OCI-LY7 (cell line): ENCODE measurements at regions of chr13 and their contacts with region 1.

Region 1: DNA sequence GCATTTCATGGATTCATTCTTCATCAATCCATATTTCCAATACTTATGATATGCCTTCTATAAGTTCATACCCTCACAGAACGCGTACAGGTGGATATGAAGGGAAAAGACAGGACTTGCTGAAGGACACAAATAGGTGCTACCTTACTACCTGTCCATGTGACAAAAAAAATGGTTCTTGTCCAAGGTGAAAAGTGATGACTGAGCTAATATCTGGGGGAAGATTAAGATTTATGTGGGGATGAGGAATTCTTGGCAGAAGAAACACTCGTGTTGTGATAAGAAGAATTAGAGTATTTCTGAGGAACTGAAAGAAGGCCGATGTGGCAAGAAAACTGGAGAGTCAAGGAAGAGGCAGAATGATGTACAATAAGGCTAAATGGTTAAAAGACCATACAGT is 356.4 kb upstream of the ATXN8OS start:
- DNase-seq: no peak
- H3K4me3 ChIP-seq: no peak overlapping the region
- H3K27ac ChIP-seq: no peak overlapping the region
- H3K4me1 ChIP-seq: no peaks in the 10 kb centered on the region
- CTCF ChIP-seq: no peak

Region 2: DNA sequence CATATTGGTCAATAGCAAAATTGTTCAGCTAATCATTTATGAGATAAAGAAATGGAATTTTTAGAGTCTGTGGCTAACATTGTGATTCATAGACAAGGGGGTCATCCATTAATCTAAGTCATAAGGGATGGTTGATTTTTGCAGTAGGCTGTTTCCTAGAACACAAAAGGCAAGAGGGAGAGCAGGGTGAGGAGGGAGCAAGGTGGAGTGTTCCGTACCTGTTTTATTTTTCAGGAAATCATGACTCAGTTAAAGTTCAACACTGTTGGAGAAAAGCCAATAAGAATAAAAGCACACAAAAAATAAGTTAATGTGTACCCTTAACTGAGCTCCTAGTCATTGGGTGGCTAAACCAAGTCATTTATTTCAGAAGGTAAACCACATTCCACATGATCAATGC is 156.1 kb before region 1 on chr13:
- CTCF ChIA-PET with region 1: no interaction called
- POLR2A ChIA-PET with region 1: no interaction called
- intact Hi-C with region 1: no loop called
- DNase-seq: no peak
- H3K4me3 ChIP-seq: no peak overlapping the region
- H3K27ac ChIP-seq: no peak overlapping the region
- H3K4me1 ChIP-seq: no peaks in the 10 kb centered on the region
- CTCF ChIP-seq: no peak

Region 3: DNA sequence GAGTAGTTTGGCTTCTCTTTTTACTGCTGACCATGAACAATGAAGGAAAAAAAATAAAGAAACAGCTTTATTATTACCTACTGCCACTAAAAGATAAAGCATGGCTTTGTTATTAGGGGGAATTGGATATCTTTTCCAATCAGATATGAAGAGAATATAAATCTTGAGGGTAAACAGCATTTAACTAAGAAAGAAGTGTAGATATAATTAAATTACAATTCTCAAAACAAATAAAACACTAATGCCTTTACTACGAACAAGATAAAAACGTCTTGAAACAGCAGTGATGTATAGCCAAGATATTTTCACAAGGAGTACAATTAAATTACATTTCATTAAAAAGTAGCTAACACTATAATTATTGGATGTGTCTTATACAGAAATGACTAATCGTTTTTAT is 69.5 kb before region 1 on chr13:
- CTCF ChIA-PET with region 1: no interaction called
- POLR2A ChIA-PET with region 1: no interaction called
- intact Hi-C with region 1: loop called (anchors 2 kb)
- DNase-seq: no peak
- H3K4me3 ChIP-seq: no peak overlapping the region
- H3K27ac ChIP-seq: no peak overlapping the region
- H3K4me1 ChIP-seq: no peaks in the 10 kb centered on the region
- CTCF ChIP-seq: no peak

Region 4: DNA sequence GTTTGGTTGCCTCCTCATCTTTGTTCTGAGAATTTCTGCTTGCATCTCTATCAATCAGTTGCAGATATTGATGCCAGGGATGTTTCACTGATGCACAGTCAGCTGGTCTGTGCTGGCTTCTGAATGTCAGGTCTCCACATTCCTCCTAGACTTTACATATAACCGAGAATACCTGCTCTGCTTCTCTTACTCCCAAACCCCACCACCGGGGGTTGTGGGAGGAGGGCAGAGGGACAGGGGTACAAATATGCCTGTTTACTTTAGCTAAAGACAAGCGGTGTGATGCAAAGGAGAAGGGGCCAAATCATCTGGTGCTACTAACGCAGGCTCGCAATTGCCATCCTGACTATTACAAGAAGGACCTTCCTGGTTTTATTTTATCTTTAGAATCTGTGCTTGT is 374.4 kb after region 1 on chr13:
- CTCF ChIA-PET with region 1: no interaction called
- POLR2A ChIA-PET with region 1: no interaction called
- intact Hi-C with region 1: no loop called
- DNase-seq: no peak
- H3K4me3 ChIP-seq: no peak overlapping the region
- H3K27ac ChIP-seq: no peak overlapping the region
- H3K4me1 ChIP-seq: no peaks in the 10 kb centered on the region
- CTCF ChIP-seq: no peak